WTC11 (cell line): ENCODE measurements at regions of chr3 and their contacts with region 1.

Region 1: GRCh38 chr3:194265483-194265892 is 85.6 kb downstream of the CPN2 start:
- DNase-seq: no peak
- ATAC-seq: no peak
- H3K4me3 Mint-ChIP-seq: no peak overlapping the region
- H3K27ac Mint-ChIP-seq: peak overlapping the region; percentile 45; the same call in 1 of the 2 replicates
- H3K4me1 Mint-ChIP-seq: peaks cover 30% of the 10 kb centered on the region
- H3K27me3 Mint-ChIP-seq: 0 out of 2 replicates have a peak, but pooled peaks cover 2% of the 10 kb centered on the region
- CTCF ChIP-seq: no peak

Region 2: GRCh38 chr3:194141415-194142155 is 123.9 kb before region 1 on chr3:
- CTCF ChIA-PET with region 1: interaction called, 11 read pairs
- POLR2A ChIA-PET with region 1: no interaction called
- DNase-seq: peak; percentile 87
- ATAC-seq: peak; percentile 52
- H3K4me3 Mint-ChIP-seq: peak overlapping the region; percentile 10
- H3K27ac Mint-ChIP-seq: peak overlapping the region; percentile 90
- H3K4me1 Mint-ChIP-seq: peaks cover 40% of the 10 kb centered on the region
- H3K27me3 Mint-ChIP-seq: no peaks in the 10 kb centered on the region
- CTCF ChIP-seq: no peak

Region 3: GRCh38 chr3:194176274-194176991 is 89.1 kb before region 1 on chr3:
- CTCF ChIA-PET with region 1: no interaction called
- POLR2A ChIA-PET with region 1: no interaction called
- DNase-seq: peak; percentile 45
- ATAC-seq: peak; percentile 68
- H3K4me3 Mint-ChIP-seq: peak overlapping the region; percentile 40
- H3K27ac Mint-ChIP-seq: peak overlapping the region; percentile 25; the same call in 1 of the 2 replicates
- H3K4me1 Mint-ChIP-seq: peaks cover 34% of the 10 kb centered on the region
- H3K27me3 Mint-ChIP-seq: no peaks in the 10 kb centered on the region; the same call in none of the 2 replicates
- CTCF ChIP-seq: no peak

Region 4: DNA sequence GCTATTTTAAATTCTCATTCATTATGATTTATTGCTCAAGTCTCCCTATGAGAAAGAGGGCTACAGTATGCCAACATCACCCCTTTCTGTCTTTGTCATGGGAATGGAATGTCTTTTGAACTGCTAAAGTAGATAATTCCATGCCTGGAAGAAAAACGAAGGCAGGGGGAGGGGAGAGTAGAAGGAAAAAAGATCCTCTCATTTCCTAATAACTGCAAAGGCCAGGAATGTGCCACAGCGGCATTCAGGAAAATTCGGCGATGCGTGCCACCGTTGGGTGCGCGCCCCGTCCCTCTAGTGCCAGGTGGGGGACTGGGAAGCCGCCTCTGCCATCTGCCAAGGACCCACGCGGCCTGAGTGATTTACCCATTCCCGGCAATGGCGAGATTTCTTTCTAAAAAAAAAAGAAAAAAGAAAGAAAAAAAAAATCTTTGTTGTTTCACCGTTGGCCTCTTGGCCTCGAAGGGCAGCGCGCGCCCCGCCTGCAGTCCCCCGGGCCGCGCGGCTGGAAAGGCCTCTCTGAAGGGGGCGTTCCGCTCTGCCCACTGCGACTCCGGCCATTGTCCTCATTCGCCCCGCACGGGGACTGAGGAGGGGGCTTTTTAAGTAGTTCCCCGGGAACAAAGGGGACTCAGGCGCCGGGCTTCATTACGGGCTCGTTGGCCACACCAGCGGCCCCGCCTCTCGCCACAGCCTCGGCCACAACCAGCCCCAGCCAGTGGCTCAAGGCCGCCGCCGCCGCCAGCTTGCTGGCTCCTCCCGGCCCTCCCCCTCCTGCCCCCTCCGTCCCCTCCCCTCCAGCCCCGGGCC is 31.2 kb after region 1 on chr3:
- CTCF ChIA-PET with region 1: interaction called, 15 read pairs
- POLR2A ChIA-PET with region 1: interaction called, 4 read pairs
- DNase-seq: peak; percentile 84
- ATAC-seq: peak; percentile 59
- H3K4me3 Mint-ChIP-seq: peak overlapping the region; percentile 51
- H3K27ac Mint-ChIP-seq: peak overlapping the region; percentile 84
- H3K4me1 Mint-ChIP-seq: peaks cover 49% of the 10 kb centered on the region
- H3K27me3 Mint-ChIP-seq: peaks cover 6% of the 10 kb centered on the region
- CTCF ChIP-seq: no peak

Region 5: GRCh38 chr3:194352667-194353246 is 87.3 kb after region 1 on chr3:
- CTCF ChIA-PET with region 1: no interaction called
- POLR2A ChIA-PET with region 1: no interaction called
- DNase-seq: no peak
- ATAC-seq: no peak
- H3K4me3 Mint-ChIP-seq: no peak overlapping the region
- H3K27ac Mint-ChIP-seq: no peak overlapping the region
- H3K4me1 Mint-ChIP-seq: no peaks in the 10 kb centered on the region
- H3K27me3 Mint-ChIP-seq: no peaks in the 10 kb centered on the region; the same call in 1 of the 2 replicates
- CTCF ChIP-seq: no peak